ENCODE measurements at regions of chr11 and their contacts with region 1.

Region 1: DNA sequence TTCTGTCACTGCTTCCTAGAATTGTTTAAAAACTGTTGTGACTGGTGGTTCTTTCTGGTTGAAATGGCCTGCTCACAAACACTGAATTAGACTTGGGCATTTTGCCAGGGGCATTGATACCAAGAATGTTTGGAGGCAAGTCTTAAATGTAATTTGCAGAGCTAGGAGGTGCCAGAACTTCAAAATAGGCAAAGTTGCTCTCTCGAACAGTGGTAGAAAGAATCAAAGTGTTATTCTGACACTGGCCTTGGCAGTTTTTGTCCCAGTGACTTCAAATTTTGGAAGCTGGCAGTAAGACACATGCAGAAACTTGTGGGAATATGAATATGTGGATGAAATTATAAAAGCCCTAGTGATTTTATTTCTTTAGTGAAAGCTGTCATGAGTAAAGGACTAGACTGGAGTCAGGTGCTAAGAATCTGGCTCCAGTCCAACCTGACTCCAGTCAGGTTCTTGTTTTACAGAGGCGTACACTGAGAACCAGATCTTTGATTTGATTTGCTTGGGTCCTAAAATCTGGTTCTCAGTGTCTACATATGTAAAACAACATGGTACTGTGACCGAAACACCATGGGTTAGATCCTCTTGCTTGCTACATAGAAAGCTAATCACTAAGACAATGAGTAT is 20.9 kb downstream of the SVIP start:
- DNase-seq: no peak
- H3K4me3 ChIP-seq: no peak overlapping the region
- H3K27ac ChIP-seq: no peak overlapping the region
- H3K27me3 ChIP-seq: no peaks in the 10 kb centered on the region
- CTCF ChIP-seq: no peak

Region 2: DNA sequence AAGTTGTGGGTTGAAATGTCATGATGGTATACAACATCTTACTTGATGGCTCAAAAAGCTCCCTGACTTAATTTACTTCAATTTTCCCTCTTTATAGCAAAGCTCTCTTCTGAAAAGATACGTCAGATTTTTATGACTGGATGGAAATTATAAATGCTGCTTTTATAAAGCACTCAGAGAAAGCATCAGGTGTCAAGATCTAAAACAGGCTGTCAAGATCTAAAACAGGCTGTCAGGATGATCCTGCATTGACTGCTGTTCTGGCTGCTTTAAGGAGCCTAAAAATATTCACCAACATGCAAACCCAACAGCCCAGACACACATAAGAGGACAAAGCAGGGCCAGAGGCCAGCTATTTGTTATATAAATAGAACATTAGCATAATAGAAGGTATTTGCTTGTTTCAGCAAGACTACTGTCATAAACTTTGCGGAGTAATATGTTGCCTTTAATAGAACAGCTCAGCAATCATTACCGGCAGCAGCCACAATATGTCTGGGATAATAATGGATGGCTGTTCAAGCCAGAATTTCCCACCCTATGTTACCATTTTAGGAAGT is 693.1 kb before region 1 on chr11:
- CTCF ChIA-PET with region 1: no interaction called
- POLR2A ChIA-PET with region 1: no interaction called
- DNase-seq: no peak
- H3K4me3 ChIP-seq: no peak overlapping the region
- H3K27ac ChIP-seq: no peak overlapping the region
- H3K27me3 ChIP-seq: no peaks in the 10 kb centered on the region
- CTCF ChIP-seq: no peak

Region 3: GRCh38 chr11:22763166-22763565 is 45.5 kb before region 1 on chr11:
- CTCF ChIA-PET with region 1: no interaction called
- POLR2A ChIA-PET with region 1: no interaction called
- DNase-seq: no peak
- H3K4me3 ChIP-seq: no peak overlapping the region
- H3K27ac ChIP-seq: no peak overlapping the region
- H3K27me3 ChIP-seq: no peaks in the 10 kb centered on the region
- CTCF ChIP-seq: no peak

Region 4: DNA sequence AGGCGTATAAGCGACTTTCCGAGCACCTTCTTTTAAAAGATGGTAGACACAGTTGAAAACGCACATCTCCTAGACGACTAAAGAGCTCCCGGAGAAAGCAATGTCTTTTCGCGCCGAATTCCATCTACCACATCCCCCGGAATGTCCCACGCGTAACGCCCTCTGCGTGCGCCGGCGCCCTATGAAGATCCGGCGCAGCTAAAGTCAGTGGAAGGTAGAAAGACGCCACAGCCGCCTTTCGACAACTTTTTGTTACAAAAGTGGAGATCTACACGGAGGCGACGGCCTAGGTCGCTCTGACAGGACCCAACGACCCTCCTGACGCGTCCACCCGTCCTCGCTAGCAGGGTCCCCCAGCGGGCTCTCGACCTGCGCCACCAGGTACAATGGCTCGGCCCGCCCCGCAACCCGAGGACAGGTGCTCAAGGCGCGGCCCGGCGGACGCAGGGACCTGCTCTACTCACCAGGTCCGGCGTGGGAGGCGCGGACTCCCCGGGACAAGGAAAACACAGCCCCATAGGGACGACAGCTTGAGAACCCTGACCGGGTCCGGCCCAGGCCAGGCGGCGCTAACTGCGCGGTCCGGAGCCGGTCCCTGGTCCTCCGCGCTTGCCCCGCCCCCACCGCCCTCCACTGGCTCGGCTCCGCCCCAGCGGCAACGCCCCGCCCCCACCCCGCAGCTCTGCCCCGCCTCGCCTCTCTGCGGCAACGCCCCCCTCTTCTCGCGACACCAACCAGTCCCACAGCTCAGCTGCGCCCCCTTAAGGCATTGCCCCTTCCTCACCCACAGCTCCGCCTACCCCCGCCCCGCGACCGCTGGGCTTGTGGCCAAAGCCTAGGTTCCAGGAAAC is 20.8 kb after region 1 on chr11 and contains the start of gene SVIP:
- CTCF ChIA-PET with region 1: interaction called, 14 read pairs
- POLR2A ChIA-PET with region 1: no interaction called
- DNase-seq: peak; percentile 72
- H3K4me3 ChIP-seq: peak within 1 kb of the TSS; percentile 91
- H3K27ac ChIP-seq: peak within 1 kb of the TSS; percentile 35
- H3K27me3 ChIP-seq: no peaks in the 10 kb centered on the region
- CTCF ChIP-seq: peak; percentile 74
- polyA plus RNA-seq, gene SVIP: 7.4 and 10.3 TPM in 2 replicates